Calu3 (cell line): ENCODE measurements at regions of chr11 and their contacts with region 1.

Region 1: GRCh38 chr11:117098269-117099232 is at the start of gene SIK3:
- DNase-seq: peak; percentile 90
- H3K4me3 Mint-ChIP-seq: peak within 1 kb of the TSS; percentile 88
- H3K27ac Mint-ChIP-seq: peak within 1 kb of the TSS; percentile 99
- H3K4me1 Mint-ChIP-seq: peaks cover 32% of the 10 kb centered on the region
- H3K27me3 Mint-ChIP-seq: no peaks in the 10 kb centered on the region
- CTCF ChIP-seq: no peak
- total RNA-seq, gene SIK3: 17.4 and 20.6 TPM in 2 replicates

Region 2: GRCh38 chr11:116948391-116948790 is 150.2 kb before region 1 on chr11:
- CTCF ChIA-PET with region 1: no interaction called
- intact Hi-C with region 1: loop called (anchors 10 kb)
- DNase-seq: peak; percentile 32
- H3K4me3 Mint-ChIP-seq: no peak overlapping the region
- H3K27ac Mint-ChIP-seq: no peak overlapping the region
- H3K4me1 Mint-ChIP-seq: peaks cover 8% of the 10 kb centered on the region
- H3K27me3 Mint-ChIP-seq: no peaks in the 10 kb centered on the region
- CTCF ChIP-seq: no peak

Region 3: DNA sequence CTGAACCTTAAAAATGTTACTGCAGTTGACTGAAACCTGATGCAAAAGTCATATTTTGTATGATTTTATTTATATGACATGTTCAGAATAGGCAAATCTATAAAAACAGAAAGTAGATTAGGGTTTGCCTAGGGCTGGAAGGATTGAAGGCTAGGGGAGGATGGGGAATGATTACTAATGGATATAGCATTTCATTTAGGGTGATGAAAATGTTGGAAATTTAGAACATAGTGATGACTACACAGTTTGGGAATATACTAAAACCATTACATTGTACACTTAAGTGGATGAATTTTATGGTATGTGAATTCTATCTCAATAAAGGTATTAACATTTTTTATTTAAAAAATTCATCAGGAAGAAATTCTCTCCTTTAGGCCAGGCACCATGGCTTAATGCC is 22.6 kb after region 1 on chr11:
- CTCF ChIA-PET with region 1: no interaction called
- intact Hi-C with region 1: no loop called
- DNase-seq: no peak
- H3K4me3 Mint-ChIP-seq: no peak overlapping the region
- H3K27ac Mint-ChIP-seq: no peak overlapping the region
- H3K4me1 Mint-ChIP-seq: no peaks in the 10 kb centered on the region
- H3K27me3 Mint-ChIP-seq: peaks cover 13% of the 10 kb centered on the region
- CTCF ChIP-seq: no peak